ENCODE measurements at regions of chr11 and their contacts with region 1.

Region 1: GRCh38 chr11:44775366-44775984 is 48.7 kb downstream of the TSPAN18 start:
- DNase-seq: peak; percentile 27 to 79 (median 50)
- ATAC-seq: peak; percentile 37
- H3K4me3 ChIP-seq: no peak overlapping the region
- H3K4me3 Mint-ChIP-seq: no peak overlapping the region
- H3K27ac ChIP-seq: no peak overlapping the region
- H3K27ac Mint-ChIP-seq: no peak overlapping the region
- H3K4me1 ChIP-seq: peaks cover 17% of the 10 kb centered on the region
- H3K4me1 Mint-ChIP-seq: peaks cover 22% of the 10 kb centered on the region
- H3K27me3 ChIP-seq: no peaks in the 10 kb centered on the region
- H3K27me3 Mint-ChIP-seq: peaks cover 6% of the 10 kb centered on the region
- CTCF ChIP-seq: peak; percentile 73

Region 2: DNA sequence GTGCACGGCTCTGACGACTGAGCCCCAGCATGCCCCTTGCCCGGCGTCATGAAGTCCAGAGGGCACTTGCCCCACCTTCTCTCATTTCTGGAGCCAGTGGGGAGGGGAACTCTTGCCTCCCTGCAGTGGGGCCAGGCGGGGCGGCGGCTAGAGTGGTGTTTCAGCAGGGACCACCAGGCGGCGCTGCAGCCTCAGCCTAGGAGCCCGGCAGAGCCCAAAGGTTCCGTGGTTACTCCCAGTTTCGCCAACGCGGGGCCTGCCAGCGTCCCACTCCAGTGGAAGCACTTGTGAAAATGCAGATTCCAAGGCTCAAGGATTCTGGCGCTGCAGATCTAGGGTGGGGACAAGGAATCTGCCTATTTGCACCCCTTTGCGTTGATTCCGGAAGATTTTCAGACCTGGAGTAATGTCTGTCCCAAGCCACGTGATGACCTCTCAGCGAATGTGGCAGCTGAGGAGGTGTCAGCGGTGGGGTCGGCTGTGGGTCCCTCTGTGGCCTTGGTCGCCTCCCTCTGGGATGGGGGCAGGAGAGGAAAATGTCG is 154.3 kb before region 1 on chr11:
- CTCF ChIA-PET with region 1: no interaction called
- POLR2A ChIA-PET with region 1: no interaction called
- intact Hi-C with region 1: loop called in 1 of 2 experiments (anchors 2 kb)
- DNase-seq: peak; percentile 30 to 80 (median 60)
- ATAC-seq: peak; percentile 69
- H3K4me3 ChIP-seq: no peak overlapping the region
- H3K4me3 Mint-ChIP-seq: no peak overlapping the region
- H3K27ac ChIP-seq: no peak overlapping the region
- H3K27ac Mint-ChIP-seq: no peak overlapping the region
- H3K4me1 ChIP-seq: peaks cover 38% of the 10 kb centered on the region
- H3K4me1 Mint-ChIP-seq: peaks cover 36% of the 10 kb centered on the region
- H3K27me3 ChIP-seq: no peaks in the 10 kb centered on the region
- H3K27me3 Mint-ChIP-seq: no peaks in the 10 kb centered on the region
- CTCF ChIP-seq: peak; percentile 65

Region 3: GRCh38 chr11:44658506-44658850 is 117.0 kb before region 1 on chr11:
- CTCF ChIA-PET with region 1: no interaction called
- POLR2A ChIA-PET with region 1: no interaction called
- intact Hi-C with region 1: loop called in 1 of 2 experiments (anchors 10 kb)
- DNase-seq: peak in 7 of 14 experiments; percentile 9 to 63 (median 52)
- ATAC-seq: no peak
- H3K4me3 ChIP-seq: no peak overlapping the region
- H3K4me3 Mint-ChIP-seq: no peak overlapping the region
- H3K27ac ChIP-seq: no peak overlapping the region
- H3K27ac Mint-ChIP-seq: no peak overlapping the region
- H3K4me1 ChIP-seq: peaks cover 16% of the 10 kb centered on the region
- H3K4me1 Mint-ChIP-seq: peaks cover 20% of the 10 kb centered on the region
- H3K27me3 ChIP-seq: no peaks in the 10 kb centered on the region
- H3K27me3 Mint-ChIP-seq: peaks cover 13% of the 10 kb centered on the region
- CTCF ChIP-seq: no peak

Region 4: GRCh38 chr11:44702889-44703288 is 72.6 kb before region 1 on chr11:
- CTCF ChIA-PET with region 1: no interaction called
- POLR2A ChIA-PET with region 1: no interaction called
- intact Hi-C with region 1: no loop called
- DNase-seq: no peak
- ATAC-seq: no peak
- H3K4me3 ChIP-seq: no peak overlapping the region
- H3K4me3 Mint-ChIP-seq: no peak overlapping the region
- H3K27ac ChIP-seq: no peak overlapping the region
- H3K27ac Mint-ChIP-seq: no peak overlapping the region
- H3K4me1 ChIP-seq: peaks cover 7% of the 10 kb centered on the region
- H3K4me1 Mint-ChIP-seq: no peaks in the 10 kb centered on the region
- H3K27me3 ChIP-seq: no peaks in the 10 kb centered on the region
- H3K27me3 Mint-ChIP-seq: peaks cover 12% of the 10 kb centered on the region
- CTCF ChIP-seq: no peak

Region 5: DNA sequence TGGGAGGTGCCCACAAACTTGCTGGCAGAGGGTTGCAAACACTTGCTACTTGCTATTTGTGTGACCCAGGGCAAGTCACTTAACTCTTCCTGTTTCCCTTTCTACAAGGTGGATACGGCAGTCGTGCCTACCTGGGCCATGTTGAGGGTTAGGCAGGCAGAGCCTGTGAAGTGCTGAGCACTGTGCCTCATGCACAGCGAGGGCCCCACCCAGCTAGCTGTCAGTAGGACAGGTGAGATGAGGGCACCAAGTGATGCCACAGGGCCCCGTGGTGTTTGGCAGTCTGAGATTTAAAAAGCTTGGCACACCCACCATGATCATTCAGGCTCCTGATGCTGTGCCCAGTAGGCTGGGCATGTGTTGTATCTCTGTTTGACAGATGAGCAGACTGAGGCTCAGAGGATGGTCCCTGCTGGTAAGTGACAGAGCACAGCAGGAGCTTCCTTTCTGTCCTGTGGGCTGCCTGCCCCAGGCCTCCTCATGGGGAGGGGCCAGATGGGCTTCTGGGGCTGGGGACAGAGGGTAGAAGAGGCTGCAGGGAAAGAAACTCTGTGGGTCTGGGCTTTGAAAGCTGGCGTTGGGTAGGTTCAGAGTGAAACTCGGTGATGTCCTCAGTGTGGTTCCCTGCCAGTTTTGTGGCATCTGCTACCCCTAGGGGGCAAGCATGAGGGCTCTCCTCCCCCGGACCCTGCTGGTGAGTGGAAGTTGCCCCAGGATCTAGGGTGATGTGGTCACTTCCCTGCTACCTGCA is 10.6 kb after region 1 on chr11:
- CTCF ChIA-PET with region 1: no interaction called
- POLR2A ChIA-PET with region 1: no interaction called
- intact Hi-C with region 1: no loop called
- DNase-seq: no peak
- ATAC-seq: no peak
- H3K4me3 ChIP-seq: no peak overlapping the region
- H3K4me3 Mint-ChIP-seq: no peak overlapping the region
- H3K27ac ChIP-seq: no peak overlapping the region
- H3K27ac Mint-ChIP-seq: no peak overlapping the region
- H3K4me1 ChIP-seq: peaks cover 14% of the 10 kb centered on the region
- H3K4me1 Mint-ChIP-seq: no peaks in the 10 kb centered on the region
- H3K27me3 ChIP-seq: no peaks in the 10 kb centered on the region
- H3K27me3 Mint-ChIP-seq: no peaks in the 10 kb centered on the region
- CTCF ChIP-seq: no peak